ENCODE measurements at regions of chr7 and their contacts with region 1.

Region 1: GRCh38 chr7:107563775-107564552 is at the starts of genes COG5 and DUS4L:
- DNase-seq: peak; percentile 58 to 78
- H3K4me3 ChIP-seq: peak within 1 kb of the TSS; percentile 92
- H3K27ac ChIP-seq: peak within 1 kb of the TSS; percentile 89
- H3K4me1 ChIP-seq: peaks cover 41% of the 10 kb centered on the region
- H3K27me3 ChIP-seq: no peaks in the 10 kb centered on the region
- CTCF ChIP-seq: no peak
- total RNA-seq, gene COG5: 32.3 and 43.5 TPM in 2 replicates
- total RNA-seq, gene DUS4L: 22.0 and 25.2 TPM in 2 replicates

Region 2: DNA sequence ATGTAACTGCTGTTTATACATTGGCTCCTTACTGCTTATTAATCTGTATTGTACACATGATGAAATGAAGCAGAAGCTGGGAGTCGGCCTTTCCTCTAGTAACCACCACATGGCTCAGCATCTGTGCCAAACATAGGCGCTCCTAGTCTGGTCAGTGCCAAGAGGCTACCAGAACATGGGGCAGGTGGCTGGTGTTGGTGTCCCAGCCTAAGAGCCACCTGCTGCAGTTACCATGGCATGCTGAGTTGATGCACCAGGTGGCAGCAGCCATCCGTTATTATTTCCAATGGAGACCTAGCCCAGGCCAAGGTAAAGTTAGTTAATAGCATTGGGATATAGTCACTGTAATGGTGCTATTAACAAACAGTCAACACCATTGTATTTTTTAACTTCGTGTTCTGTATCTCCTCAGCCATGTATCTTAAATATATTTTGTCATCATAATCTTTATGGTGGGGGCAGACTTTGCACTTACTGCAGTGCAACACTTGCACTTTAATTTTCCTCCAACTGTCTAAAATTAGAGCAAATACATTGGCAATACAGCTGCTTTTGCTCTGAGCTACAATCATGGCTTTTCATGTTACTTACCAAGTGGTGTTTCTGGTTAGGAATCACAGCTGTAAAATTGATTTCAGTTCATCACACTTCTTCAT is 362.0 kb before region 1 on chr7:
- CTCF ChIA-PET with region 1: no interaction called
- POLR2A ChIA-PET with region 1: no interaction called
- intact Hi-C with region 1: loop called (anchors 10 kb)
- DNase-seq: peak in 1 of 2 experiments; percentile 55
- H3K4me3 ChIP-seq: no peak overlapping the region
- H3K27ac ChIP-seq: no peak overlapping the region
- H3K4me1 ChIP-seq: no peaks in the 10 kb centered on the region
- H3K27me3 ChIP-seq: no peaks in the 10 kb centered on the region
- CTCF ChIP-seq: peak; percentile 67

Region 3: DNA sequence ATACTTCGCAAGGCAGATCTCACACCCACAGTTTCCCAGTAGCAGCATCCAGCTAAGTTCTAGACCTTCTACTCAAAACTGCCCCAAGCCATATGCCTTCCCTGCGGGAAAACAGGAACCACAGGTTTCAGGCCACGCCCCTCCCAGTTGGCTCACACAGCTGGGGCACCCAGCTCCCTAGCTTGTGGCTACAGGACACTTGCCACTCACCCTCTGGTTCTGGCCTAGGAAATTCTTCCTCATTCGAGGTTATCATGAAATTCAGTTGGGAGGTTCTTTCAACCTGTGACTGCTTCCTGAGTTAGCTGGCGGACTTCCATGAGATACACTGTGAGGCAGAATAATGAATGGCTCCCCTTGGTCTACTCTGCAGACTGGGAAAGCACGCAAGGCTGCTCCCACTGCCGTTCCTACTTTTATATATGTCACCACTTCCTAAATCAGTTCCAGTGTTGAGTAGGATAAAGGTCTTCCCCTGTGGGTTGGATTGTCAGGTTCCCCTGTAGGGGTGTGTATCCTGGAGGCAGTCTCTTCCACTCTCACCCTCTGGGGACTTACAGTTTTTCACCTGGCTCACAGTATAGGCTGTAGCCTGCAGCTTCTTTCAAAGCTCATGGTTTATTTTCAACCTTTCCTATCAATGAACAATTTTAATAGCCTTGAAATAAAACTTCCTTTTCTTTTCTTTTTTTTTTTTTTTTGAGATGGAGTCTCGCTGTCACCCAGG is 57.2 kb before region 1 on chr7:
- CTCF ChIA-PET with region 1: interaction called, 3 read pairs
- POLR2A ChIA-PET with region 1: interaction called, 3 read pairs
- intact Hi-C with region 1: loop called (anchors 2 kb)
- DNase-seq: peak; percentile 97 to 98
- H3K4me3 ChIP-seq: peak overlapping the region; percentile 43; the same call in 1 of the 2 replicates
- H3K27ac ChIP-seq: peak overlapping the region; percentile 95
- H3K4me1 ChIP-seq: peaks cover 40% of the 10 kb centered on the region
- H3K27me3 ChIP-seq: no peaks in the 10 kb centered on the region
- CTCF ChIP-seq: no peak

Region 4: DNA sequence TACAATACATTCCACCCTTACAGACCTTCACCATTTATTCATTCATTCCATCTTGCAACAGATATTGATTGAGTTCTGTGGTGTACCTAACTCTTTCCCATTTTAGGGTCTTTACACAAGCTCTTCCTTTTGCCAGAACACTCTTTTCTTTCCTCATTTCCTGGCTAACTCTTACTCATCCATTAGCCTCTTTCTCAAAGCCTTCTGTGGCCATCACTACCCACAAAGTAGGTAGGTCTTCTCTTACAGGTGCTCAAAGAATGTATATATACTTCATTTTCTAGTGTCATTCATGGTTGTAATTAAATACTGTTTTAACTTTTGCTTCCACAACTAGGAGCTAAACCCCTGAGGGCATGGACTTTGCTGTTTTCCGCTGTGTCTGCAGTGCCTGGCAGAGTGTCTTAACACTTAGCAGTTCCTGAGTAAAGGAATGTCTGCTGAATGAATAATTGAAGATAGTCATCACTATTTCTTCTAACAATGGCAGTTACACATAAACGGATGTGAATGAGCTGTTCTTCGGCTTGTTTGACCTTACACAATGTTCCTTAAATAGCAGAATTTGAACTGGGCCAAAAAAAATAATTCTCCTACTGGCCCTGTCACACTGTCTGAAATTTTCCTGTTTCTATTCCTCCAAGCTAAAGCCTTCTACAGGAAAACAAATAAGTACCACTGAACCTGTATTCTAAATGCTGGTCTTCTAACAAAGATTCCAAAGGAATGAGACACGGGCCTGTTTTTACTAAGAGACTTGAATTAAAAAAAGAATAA is 31.2 kb after region 1 on chr7:
- CTCF ChIA-PET with region 1: no interaction called
- POLR2A ChIA-PET with region 1: interaction called, 22 read pairs
- intact Hi-C with region 1: loop called (anchors 1 kb)
- DNase-seq: peak; percentile 73 to 97
- H3K4me3 ChIP-seq: no peak overlapping the region
- H3K27ac ChIP-seq: peak overlapping the region; percentile 84
- H3K4me1 ChIP-seq: peaks cover 39% of the 10 kb centered on the region
- H3K27me3 ChIP-seq: no peaks in the 10 kb centered on the region
- CTCF ChIP-seq: no peak

Region 5: DNA sequence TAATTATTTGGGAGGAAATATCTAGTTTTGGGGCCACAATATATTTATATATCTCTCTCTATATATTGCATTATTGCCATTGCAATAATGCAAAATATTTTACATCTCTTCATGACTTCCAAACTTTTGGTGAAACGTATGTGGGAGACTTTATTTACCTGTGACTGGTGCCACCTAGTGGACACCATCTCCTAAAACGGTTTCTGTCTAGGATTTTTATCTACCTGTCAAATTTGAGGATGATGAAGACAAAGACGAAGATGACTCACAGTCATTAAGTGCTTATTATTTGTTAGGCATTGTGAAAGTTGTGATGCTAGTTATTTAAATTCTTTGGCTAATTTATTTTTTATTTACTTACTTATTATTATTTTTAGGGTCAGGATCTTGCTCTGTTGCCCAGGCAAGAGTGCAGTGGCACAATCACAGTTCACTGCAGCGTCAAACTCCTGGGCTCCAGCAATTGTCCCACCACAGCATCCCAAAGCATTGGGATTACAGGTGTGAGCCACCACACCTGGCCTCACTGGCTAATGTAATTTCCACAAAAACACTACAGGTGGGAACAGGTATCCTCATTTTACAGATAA is 161.3 kb after region 1 on chr7:
- CTCF ChIA-PET with region 1: no interaction called
- POLR2A ChIA-PET with region 1: no interaction called
- intact Hi-C with region 1: loop called (anchors 2 kb)
- DNase-seq: peak; percentile 45 to 73
- H3K4me3 ChIP-seq: no peak overlapping the region
- H3K27ac ChIP-seq: no peak overlapping the region
- H3K4me1 ChIP-seq: no peaks in the 10 kb centered on the region
- H3K27me3 ChIP-seq: no peaks in the 10 kb centered on the region
- CTCF ChIP-seq: peak; percentile 86

Region 6: DNA sequence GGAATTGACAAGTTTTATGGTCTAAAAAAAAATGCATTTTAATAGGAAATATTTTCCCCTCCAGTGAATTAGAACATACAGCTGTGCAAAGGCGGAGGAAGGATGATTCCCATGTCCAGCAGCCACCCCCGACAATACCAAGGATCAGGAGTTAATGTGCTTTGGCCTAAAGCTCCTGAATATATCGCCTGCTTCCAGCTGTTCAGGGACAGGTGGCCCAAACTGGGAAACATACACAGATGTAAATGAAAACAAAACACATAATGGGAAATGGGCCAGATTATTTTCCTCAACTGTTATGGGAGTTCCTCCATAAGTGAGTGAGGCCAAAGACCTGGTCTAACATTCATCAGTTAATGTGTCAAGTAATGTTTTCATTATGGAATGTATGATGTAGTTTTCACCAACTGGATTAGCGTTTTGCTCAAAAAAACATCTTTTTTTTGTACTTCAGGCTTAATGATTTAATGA is 494.0 kb after region 1 on chr7:
- CTCF ChIA-PET with region 1: no interaction called
- POLR2A ChIA-PET with region 1: no interaction called
- intact Hi-C with region 1: no loop called
- DNase-seq: no peak
- H3K4me3 ChIP-seq: no peak overlapping the region
- H3K27ac ChIP-seq: no peak overlapping the region
- H3K4me1 ChIP-seq: peaks cover 8% of the 10 kb centered on the region; the same call in 1 of the 2 replicates
- H3K27me3 ChIP-seq: no peaks in the 10 kb centered on the region
- CTCF ChIP-seq: no peak

Measured in PC-9 (cell line).